K562 (cell line): ENCODE measurements at regions of chr14 and their contacts with region 1.

Region 1: DNA sequence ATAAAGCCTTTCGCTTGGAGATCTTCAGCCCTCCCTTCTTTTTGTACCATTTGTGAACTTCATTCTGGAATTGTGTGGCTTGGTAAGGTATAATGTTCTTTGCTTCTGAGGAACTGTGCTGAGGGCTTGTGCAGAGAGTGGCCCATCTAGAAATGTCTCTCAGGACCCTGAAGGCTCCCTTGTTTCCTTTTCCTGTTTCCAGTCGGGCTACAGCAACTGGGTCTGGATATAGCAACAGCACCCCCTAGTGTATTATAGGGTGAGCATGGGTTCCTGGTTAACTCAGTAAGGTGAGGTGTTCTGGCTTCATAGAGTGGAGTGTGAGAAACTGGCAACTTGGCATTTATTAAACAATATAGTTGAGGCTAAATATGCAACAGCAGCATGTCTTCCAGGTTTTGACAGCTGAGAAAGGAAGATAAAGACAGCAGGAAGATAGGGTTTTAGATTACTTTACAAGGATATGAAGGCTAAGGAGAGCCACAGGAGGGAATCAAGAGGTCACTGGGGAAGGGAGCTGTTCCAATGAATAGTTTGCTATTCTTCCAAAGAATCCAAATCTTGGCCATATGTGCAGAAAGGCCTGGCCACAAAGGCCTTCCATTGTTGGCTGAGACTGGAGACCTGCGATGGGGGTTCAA is 49.1 kb upstream of the RNU6-8 start:
- DNase-seq: peak; percentile 22 to 67 (median 45)
- ATAC-seq: peak; percentile 95
- H3K4me3 ChIP-seq: no peak overlapping the region
- H3K27ac ChIP-seq: no peak overlapping the region
- H3K4me1 ChIP-seq: no peaks in the 10 kb centered on the region
- H3K27me3 ChIP-seq: no peaks in the 10 kb centered on the region
- CTCF ChIP-seq: peak; percentile 73 to 85 (median 77)
- EP300 ChIP-seq: no peak
- POLR2A ChIP-seq: no peak
- RAD21 ChIP-seq: peak; percentile 84 to 93

Region 2: DNA sequence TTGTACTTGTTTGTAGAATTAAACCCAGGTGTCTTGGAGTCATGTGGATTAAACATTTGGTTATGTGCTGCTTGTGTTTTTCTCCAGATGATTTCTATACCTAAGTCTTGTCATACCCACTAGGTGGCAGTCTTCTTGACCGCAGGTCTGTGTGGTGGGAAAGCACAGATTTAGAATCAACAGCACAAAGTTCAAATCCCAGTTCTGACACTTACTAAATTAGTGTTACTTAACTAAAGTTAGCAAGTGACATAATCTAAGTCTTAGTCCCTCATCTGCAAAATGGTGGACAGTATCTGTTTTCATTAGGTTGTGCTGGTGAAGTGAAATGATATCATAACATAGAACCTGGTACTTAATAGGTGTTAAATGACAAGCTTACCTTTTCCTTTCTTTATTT is 326.0 kb before region 1 on chr14:
- CTCF ChIA-PET with region 1: no interaction called
- POLR2A ChIA-PET with region 1: no interaction called
- in situ Hi-C with region 1: loop called (anchors 5 kb)
- intact Hi-C with region 1: loop called (anchors 2 kb)
- DNase-seq: peak; percentile 26 to 40 (median 32)
- ATAC-seq: peak; percentile 63; the same call in 2 of the 3 replicates
- H3K4me3 ChIP-seq: no peak overlapping the region
- H3K27ac ChIP-seq: no peak overlapping the region
- H3K4me1 ChIP-seq: no peaks in the 10 kb centered on the region
- H3K27me3 ChIP-seq: no peaks in the 10 kb centered on the region
- CTCF ChIP-seq: peak; percentile 47 to 60 (median 54)
- EP300 ChIP-seq: no peak
- POLR2A ChIP-seq: no peak
- RAD21 ChIP-seq: peak; percentile 50 to 60

Region 3: DNA sequence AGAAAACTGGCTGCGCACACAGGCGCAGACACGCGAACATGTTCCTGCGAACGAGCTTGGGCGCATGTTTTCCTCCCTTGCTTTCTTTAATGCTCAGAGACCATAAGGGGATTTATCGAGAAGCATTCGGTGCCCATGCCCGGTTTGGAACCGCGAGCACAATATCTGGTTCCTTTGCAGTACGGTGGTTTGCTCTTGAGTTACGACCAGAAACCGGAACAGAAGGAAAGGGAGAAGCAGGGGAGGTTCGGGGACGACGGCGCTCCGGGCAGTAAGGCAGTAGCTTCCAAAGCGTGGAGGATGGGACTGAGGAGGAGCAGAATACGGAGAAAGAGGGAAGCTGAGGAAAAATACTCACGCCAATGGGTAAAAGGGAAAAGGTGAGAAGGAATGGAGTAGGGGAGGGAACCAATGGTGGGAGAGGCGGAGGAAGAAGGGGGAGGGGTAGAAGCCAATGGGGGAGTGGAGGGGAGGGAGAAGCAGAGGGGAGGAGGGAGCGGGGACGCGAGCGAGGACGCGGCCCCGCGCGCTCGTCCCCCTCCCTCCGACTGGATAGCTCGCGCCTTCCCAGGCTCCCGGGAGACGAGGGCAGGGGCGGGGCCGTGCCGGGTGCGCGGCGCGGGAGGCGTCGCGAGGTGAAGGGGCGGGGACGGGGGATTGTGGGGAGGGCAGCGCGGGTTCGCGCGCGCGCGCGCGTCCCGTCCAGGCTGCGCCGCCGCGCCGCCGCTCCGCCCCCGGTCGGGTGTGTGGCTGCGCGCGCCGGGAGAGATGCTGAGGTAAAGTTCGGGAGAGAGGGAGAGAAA is 175.7 kb before region 1 on chr14:
- CTCF ChIA-PET with region 1: interaction called, 12 read pairs
- POLR2A ChIA-PET with region 1: interaction called, 4 read pairs
- in situ Hi-C with region 1: loop called (anchors 5 kb)
- intact Hi-C with region 1: loop called (anchors 1 kb)
- DNase-seq: peak; percentile 82 to 95 (median 84)
- ATAC-seq: peak; percentile 84
- H3K4me3 ChIP-seq: peak overlapping the region; percentile 78
- H3K27ac ChIP-seq: peak overlapping the region; percentile 91
- H3K4me1 ChIP-seq: no peaks in the 10 kb centered on the region; a peak in 1 of 5 replicates
- H3K27me3 ChIP-seq: no peaks in the 10 kb centered on the region
- CTCF ChIP-seq: no peak
- EP300 ChIP-seq: no peak
- POLR2A ChIP-seq: peak; percentile 75
- RAD21 ChIP-seq: no peak

Region 4: GRCh38 chr14:32469388-32470160 is 217.4 kb after region 1 on chr14:
- CTCF ChIA-PET with region 1: interaction called, 6 read pairs
- POLR2A ChIA-PET with region 1: no interaction called
- in situ Hi-C with region 1: loop called (anchors 5 kb)
- intact Hi-C with region 1: loop called (anchors 2 kb)
- DNase-seq: peak; percentile 5 to 29 (median 8)
- ATAC-seq: no peak
- H3K4me3 ChIP-seq: no peak overlapping the region
- H3K27ac ChIP-seq: no peak overlapping the region
- H3K4me1 ChIP-seq: no peaks in the 10 kb centered on the region
- H3K27me3 ChIP-seq: peaks cover 0 to 5% of the 10 kb centered on the region in 2 experiments; a peak in 2 of 5 replicates
- CTCF ChIP-seq: peak in 1 of 3 experiments; percentile 63; a peak in 2 of 6 replicates
- EP300 ChIP-seq: no peak
- POLR2A ChIP-seq: no peak
- RAD21 ChIP-seq: peak; percentile 68 to 72

Region 5: DNA sequence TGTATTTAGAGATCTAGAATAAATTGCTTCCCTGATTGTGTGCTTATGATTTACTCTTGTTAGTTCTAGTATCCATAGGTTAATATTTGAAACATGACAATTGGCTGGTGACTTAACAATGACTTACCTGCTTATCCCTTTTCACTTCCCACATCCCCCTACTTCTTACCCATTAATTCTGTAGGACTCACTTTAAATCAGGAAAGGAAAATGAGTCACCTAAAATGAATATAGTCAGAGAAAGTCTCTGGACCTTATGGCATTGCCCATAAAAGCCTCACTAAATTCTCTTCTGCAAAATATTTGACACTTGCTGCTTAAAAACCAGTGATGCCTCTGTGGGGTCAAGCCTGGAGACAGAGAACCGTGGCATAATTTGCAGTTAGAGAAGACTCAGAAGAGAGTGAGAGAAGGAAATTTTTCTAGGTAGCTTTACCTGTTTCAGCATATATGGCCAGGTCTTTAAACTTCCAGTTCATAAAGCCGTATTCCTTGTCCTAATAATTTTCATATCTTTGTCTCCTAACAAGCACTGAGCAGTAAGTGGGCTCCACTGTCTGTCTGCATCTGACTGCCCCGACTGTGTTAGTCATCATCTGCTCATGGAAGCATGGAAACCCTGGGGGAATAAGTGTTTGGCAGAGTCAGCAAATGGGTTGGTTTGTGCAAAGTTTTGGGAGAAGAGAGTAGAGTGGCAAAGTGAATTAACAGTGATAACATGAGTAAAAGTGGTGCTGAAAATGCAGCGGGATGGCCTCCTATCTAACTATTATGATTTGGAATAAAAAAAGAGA is 371.3 kb after region 1 on chr14:
- CTCF ChIA-PET with region 1: no interaction called
- POLR2A ChIA-PET with region 1: no interaction called
- in situ Hi-C with region 1: no loop called
- intact Hi-C with region 1: no loop called
- DNase-seq: no peak
- ATAC-seq: no peak
- H3K4me3 ChIP-seq: no peak overlapping the region
- H3K27ac ChIP-seq: no peak overlapping the region
- H3K4me1 ChIP-seq: no peaks in the 10 kb centered on the region
- H3K27me3 ChIP-seq: no peaks in the 10 kb centered on the region
- CTCF ChIP-seq: no peak
- EP300 ChIP-seq: no peak
- POLR2A ChIP-seq: no peak
- RAD21 ChIP-seq: no peak

Region 6: GRCh38 chr14:33081259-33081658 is 829.1 kb after region 1 on chr14:
- CTCF ChIA-PET with region 1: no interaction called
- POLR2A ChIA-PET with region 1: no interaction called
- in situ Hi-C with region 1: no loop called
- intact Hi-C with region 1: no loop called
- DNase-seq: no peak
- ATAC-seq: no peak
- H3K4me3 ChIP-seq: no peak overlapping the region
- H3K27ac ChIP-seq: no peak overlapping the region
- H3K4me1 ChIP-seq: no peaks in the 10 kb centered on the region
- H3K27me3 ChIP-seq: no peaks in the 10 kb centered on the region
- CTCF ChIP-seq: no peak
- EP300 ChIP-seq: no peak
- POLR2A ChIP-seq: no peak
- RAD21 ChIP-seq: no peak